ENCODE measurements at regions of chr4 and their contacts with region 1.

Region 1: GRCh38 chr4:38759113-38759789 is 23.5 kb downstream of the TLR10 start:
- DNase-seq: peak; percentile 76
- ATAC-seq: peak; percentile 80
- H3K4me3 Mint-ChIP-seq: no peak overlapping the region
- H3K27ac Mint-ChIP-seq: no peak overlapping the region
- H3K4me1 Mint-ChIP-seq: peaks cover 16% of the 10 kb centered on the region
- H3K27me3 Mint-ChIP-seq: no peaks in the 10 kb centered on the region
- CTCF ChIP-seq: peak; percentile 84

Region 2: DNA sequence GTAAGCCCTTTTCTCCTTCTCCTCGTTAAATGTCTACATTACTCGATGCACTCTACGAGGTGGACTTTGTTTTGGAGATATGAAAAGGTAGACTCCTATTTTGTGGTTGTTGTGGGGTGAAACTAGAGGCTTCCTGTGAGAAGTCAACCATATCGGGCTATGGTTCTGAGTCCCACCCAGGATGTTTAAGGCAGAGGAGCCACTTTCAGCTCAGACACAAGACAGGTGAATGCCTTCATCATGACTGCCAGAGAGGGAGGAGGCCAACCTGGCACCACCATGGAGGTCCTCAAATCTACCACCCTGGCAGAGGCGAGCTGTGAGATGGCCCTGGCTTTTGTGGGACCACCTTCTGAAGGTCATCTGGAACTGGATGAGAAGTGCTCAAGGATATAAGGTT is 249.7 kb before region 1 on chr4:
- CTCF ChIA-PET with region 1: no interaction called
- POLR2A ChIA-PET with region 1: no interaction called
- intact Hi-C with region 1: no loop called
- DNase-seq: peak; percentile 51
- ATAC-seq: peak; percentile 88
- H3K4me3 Mint-ChIP-seq: peak overlapping the region; percentile 11
- H3K27ac Mint-ChIP-seq: peak overlapping the region; percentile 0
- H3K4me1 Mint-ChIP-seq: peaks cover 74% of the 10 kb centered on the region
- H3K27me3 Mint-ChIP-seq: no peaks in the 10 kb centered on the region
- CTCF ChIP-seq: no peak

Region 3: DNA sequence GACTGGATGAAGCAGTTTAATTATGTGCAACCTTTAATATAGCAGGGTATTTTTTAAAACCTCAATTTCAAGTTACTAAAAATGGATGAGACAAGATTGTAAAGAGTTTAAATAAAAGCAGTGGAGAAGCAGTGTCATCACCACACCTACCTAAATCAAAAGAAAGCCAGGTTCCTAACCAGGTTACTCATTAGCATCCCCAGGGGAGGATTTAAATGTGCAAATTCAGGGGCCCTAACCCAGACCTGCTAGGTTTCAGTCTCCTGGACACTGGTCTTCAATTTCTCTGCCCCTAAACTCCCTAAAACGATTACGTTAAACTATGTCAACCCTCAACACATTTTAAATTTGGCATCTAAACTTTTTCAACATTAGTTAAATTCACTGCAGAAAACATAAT is 212.2 kb before region 1 on chr4:
- CTCF ChIA-PET with region 1: no interaction called
- POLR2A ChIA-PET with region 1: no interaction called
- intact Hi-C with region 1: no loop called
- DNase-seq: no peak
- ATAC-seq: no peak
- H3K4me3 Mint-ChIP-seq: no peak overlapping the region
- H3K27ac Mint-ChIP-seq: no peak overlapping the region
- H3K4me1 Mint-ChIP-seq: no peaks in the 10 kb centered on the region
- H3K27me3 Mint-ChIP-seq: no peaks in the 10 kb centered on the region
- CTCF ChIP-seq: no peak

Region 4: DNA sequence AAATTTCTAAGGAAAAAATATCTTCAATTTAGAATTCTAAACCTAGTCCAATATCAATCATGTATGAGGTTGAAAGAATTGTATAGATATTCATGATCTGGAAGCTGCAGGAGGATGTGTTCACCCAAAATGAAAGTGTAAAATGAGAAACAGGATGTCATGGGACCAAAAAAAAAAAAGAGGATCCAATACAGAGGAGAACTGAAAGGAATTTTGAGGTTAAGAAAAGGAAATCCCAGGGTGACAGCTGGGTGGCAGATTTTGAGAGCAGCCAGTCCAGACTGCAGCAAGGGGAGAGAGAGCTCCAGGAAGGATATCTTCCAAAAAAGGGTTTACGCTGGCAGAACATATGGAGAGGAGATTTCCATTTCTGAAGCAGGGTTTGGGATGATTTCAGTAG is 15.4 kb before region 1 on chr4:
- CTCF ChIA-PET with region 1: interaction called, 38 read pairs
- POLR2A ChIA-PET with region 1: no interaction called
- intact Hi-C with region 1: no loop called
- DNase-seq: no peak
- ATAC-seq: no peak
- H3K4me3 Mint-ChIP-seq: no peak overlapping the region
- H3K27ac Mint-ChIP-seq: no peak overlapping the region
- H3K4me1 Mint-ChIP-seq: peaks cover 3% of the 10 kb centered on the region
- H3K27me3 Mint-ChIP-seq: no peaks in the 10 kb centered on the region
- CTCF ChIP-seq: no peak

Region 5: DNA sequence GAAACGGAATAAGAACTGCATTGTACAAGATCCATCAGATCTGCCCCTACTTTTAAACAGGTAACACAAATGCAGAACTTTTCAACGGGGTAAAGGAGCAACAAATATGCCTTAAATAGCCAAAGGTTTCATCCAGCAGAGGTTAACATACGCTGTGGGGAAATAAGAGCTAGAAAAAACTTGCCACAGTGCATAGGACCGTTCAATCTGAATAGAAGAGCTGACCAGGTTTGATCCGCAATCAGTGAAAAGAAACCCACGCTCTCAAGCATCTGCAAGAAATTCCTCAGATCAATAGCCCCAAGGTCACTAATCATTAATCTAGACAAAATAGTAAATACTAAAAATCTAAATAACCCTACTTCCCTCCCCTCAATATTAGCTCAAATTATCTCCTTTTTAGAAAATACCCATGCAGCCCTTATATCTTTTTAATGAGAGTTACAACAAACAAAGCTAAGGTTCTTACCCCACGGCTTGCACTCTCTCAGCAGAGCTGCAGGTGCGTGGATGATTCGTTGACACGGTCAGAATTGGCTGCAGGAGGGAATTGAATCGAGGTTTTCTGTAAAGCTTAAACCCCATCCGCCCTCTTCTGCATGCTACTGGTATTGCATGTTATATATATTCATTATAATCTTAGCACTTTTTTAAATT is 23.3 kb after region 1 on chr4 and contains the start of gene TLR10:
- CTCF ChIA-PET with region 1: interaction called, 151 read pairs
- POLR2A ChIA-PET with region 1: no interaction called
- intact Hi-C with region 1: no loop called
- DNase-seq: peak; percentile 57
- ATAC-seq: peak; percentile 92
- H3K4me3 Mint-ChIP-seq: no peak within 1 kb of the TSS
- H3K27ac Mint-ChIP-seq: no peak within 1 kb of the TSS
- H3K4me1 Mint-ChIP-seq: peaks cover 4% of the 10 kb centered on the region
- H3K27me3 Mint-ChIP-seq: no peaks in the 10 kb centered on the region
- CTCF ChIP-seq: peak; percentile 76
- total RNA-seq, gene TLR10: 0.11 to 0.22 TPM

Region 6: GRCh38 chr4:38804654-38805295 is 45.5 kb after region 1 on chr4 and contains the start of gene TLR1:
- CTCF ChIA-PET with region 1: interaction called, 46 read pairs
- POLR2A ChIA-PET with region 1: no interaction called
- intact Hi-C with region 1: loop called (anchors 5 kb)
- DNase-seq: no peak
- ATAC-seq: peak; percentile 82
- H3K4me3 Mint-ChIP-seq: peak within 1 kb of the TSS; percentile 64
- H3K27ac Mint-ChIP-seq: peak within 1 kb of the TSS; percentile 88
- H3K4me1 Mint-ChIP-seq: peaks cover 19% of the 10 kb centered on the region
- H3K27me3 Mint-ChIP-seq: no peaks in the 10 kb centered on the region
- CTCF ChIP-seq: peak; percentile 77
- total RNA-seq, gene TLR1: 1.5 to 1.9 TPM

Region 7: DNA sequence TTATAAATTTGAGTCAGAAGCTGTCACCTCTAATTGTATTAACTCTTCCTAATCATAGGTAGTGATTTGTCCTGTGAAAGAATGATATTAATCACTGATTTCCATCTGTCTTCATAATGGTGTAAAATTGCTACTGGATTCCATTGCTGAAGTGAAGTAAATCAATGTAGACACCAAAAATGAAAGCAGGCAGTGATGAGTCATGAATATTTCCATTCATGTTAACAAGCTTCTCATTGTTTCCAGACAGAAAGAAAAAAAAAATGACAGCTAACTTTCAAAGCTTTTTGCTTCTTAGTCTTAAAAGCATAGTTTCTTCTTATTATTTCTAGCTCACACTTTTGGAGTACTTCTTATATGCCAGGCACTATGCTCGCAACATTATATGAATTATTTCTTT is 129.9 kb after region 1 on chr4:
- CTCF ChIA-PET with region 1: interaction called, 32 read pairs
- POLR2A ChIA-PET with region 1: interaction called, 4 read pairs
- intact Hi-C with region 1: no loop called
- DNase-seq: no peak
- ATAC-seq: peak; percentile 70
- H3K4me3 Mint-ChIP-seq: peak overlapping the region; percentile 40
- H3K27ac Mint-ChIP-seq: peak overlapping the region; percentile 91
- H3K4me1 Mint-ChIP-seq: peaks cover 25% of the 10 kb centered on the region
- H3K27me3 Mint-ChIP-seq: no peaks in the 10 kb centered on the region
- CTCF ChIP-seq: no peak

Region 8: DNA sequence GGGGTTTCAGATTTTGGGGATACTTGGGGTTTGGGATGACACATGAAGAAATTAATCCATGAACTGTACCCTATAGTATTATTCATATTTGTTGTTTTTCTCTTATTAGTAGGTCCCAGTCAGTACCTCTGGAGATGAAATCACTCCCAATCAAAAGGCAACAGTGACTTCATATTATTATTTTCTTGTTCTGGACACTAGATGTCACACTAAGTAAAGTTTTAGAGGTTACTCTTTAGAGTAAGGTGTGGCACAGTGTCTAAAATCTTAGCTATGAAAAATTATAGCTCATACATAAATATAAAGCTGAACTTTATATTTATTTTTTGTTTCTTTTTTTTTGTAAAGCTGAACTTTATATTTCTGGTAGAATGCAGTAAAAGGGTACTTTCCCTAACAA is 143.4 kb after region 1 on chr4:
- CTCF ChIA-PET with region 1: interaction called, 17 read pairs
- POLR2A ChIA-PET with region 1: no interaction called
- intact Hi-C with region 1: no loop called
- DNase-seq: no peak
- ATAC-seq: peak; percentile 84
- H3K4me3 Mint-ChIP-seq: no peak overlapping the region
- H3K27ac Mint-ChIP-seq: no peak overlapping the region
- H3K4me1 Mint-ChIP-seq: peaks cover 5% of the 10 kb centered on the region
- H3K27me3 Mint-ChIP-seq: peaks cover 7% of the 10 kb centered on the region
- CTCF ChIP-seq: peak; percentile 61

Measured in activated CD8-positive, alpha-beta T cell treated with anti-CD3 and anti-CD28 coated beads for 36 hours (primary cell).